Left cardiac atrium (tissue), 4 donors: ENCODE measurements at regions of chr5 and their contacts with region 1.

Region 1: DNA sequence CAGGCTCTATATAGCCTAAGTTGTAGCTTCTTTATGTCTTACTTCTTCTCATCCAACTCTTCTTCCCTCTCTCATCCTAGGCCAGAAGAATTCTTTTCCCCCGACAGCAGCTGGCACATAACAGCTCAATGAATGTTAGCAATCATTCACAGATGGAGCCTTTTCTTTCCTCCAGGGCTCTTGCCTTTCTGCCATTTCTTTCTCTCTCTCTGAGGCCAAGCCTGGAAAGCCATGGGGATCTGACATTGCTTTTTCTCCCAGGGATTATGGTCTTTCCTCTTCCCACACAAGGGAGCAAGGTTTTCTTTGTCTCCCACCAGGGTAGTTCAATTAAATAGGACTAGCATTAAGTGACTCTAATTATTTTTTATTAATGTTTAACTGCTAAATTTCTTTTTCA is 20.5 kb downstream of the SMIM15 start:
- DNase-seq: no peak
- ATAC-seq: no peak

Region 2: DNA sequence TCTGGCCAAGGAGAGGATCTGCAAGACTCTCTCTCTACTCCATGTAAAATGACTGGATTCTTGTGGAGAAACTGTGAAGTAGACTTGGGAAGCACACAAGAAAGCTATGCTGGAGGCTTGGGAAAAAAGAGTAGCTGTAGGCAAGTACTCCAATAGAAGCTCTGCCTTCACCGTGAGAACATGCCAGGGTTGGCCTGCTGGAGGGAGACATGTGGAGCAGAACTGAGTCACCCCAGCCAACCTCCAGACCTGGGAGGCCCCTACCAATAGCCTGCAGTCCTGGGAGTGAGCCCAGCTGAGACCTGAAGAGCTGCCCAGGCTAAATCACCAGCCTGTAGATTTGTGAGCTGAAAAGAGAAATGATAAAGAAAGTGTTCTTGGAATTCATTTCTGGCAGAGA is 508.5 kb before region 1 on chr5:
- intact Hi-C with region 1: no loop called
- DNase-seq: no peak
- ATAC-seq: peak; percentile 63 to 99

Region 3: GRCh38 chr5:61071526-61071925 is 70.3 kb before region 1 on chr5:
- intact Hi-C with region 1: loop called in 1 of 2 experiments (anchors 10 kb)
- DNase-seq: no peak
- ATAC-seq: no peak

Region 4: GRCh38 chr5:61228691-61229280 is 87.0 kb after region 1 on chr5:
- intact Hi-C with region 1: no loop called
- DNase-seq: no peak
- ATAC-seq: peak in 1 of 2 donors; percentile 33

Region 5: DNA sequence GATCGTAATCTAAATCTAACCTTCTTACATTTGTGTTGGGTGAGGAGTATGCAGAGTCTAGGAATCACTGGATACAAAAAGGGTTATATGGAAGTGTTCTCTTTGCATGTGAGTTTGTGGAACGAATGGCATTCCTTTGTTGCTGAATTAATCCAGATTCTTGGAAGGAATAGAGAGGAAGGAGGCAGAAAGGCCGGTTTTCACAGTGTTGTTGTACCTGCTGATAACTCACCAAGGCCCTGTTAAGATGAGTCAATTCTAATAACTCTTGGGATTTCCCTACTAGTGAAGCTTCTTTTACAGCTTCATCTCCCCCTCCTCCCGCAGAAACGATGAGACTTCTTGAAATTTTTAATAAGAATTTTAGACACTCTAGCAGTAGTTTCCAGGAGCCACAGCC is 274.2 kb after region 1 on chr5:
- intact Hi-C with region 1: no loop called
- DNase-seq: no peak
- ATAC-seq: peak in 1 of 2 donors; percentile 49